GM23248 (cell line): ENCODE measurements at regions of chr17 and their contacts with region 1.

Region 1: GRCh38 chr17:68832109-68832802 is 122.9 kb downstream of the ABCA8 start:
- DNase-seq: no peak
- H3K4me3 ChIP-seq: no peak overlapping the region
- H3K27ac ChIP-seq: no peak overlapping the region
- H3K4me1 ChIP-seq: no peaks in the 10 kb centered on the region
- H3K27me3 ChIP-seq: no peaks in the 10 kb centered on the region

Region 2: DNA sequence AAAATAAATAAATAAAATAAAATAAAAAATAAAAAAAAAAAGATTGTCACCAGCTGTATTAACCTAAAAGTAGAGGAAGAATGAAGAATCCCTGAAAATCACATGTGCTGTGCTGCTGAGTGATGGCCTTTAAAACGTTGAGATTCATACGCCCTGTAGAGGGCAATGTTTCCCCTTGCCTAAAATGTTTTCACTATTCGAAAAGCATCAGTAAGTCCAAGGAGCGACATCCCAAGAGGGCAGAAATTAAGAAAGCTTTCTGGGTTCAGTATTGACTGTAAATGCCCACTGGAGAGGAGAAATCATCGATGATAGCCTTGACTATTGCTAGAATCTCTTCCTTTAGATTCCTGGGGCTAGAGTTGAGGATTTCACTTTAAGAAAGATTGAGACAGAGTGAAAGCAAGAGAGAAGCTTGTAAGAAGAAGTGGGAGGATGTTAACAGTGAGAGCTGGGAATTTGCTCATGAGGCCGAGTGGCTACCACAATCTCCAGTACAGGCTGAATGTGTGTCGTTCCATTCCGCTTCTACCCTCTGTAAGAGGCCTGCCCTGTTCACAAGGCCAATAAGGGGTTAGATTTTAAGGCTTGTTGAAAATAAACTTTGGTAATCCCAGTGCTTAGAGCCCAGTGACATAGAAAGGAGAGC is 60.3 kb before region 1 on chr17:
- in situ Hi-C with region 1: loop called (anchors 10 kb)
- DNase-seq: peak; percentile 82
- H3K4me3 ChIP-seq: peak overlapping the region; percentile 60
- H3K27ac ChIP-seq: 0 out of 2 replicates have a peak overlapping the region, but pooled peaks have one; percentile 0
- H3K4me1 ChIP-seq: peaks cover 19% of the 10 kb centered on the region
- H3K27me3 ChIP-seq: no peaks in the 10 kb centered on the region